ENCODE measurements at regions of chr1 and their contacts with region 1.

Region 1: GRCh38 chr1:150010393-150011115 is at the start of gene OTUD7B:
- DNase-seq: peak; percentile 88
- H3K4me3 ChIP-seq: peak within 1 kb of the TSS; percentile 96 to 98 (median 97)
- H3K27ac ChIP-seq: peak within 1 kb of the TSS; percentile 81
- H3K4me1 ChIP-seq: peaks cover 32% of the 10 kb centered on the region
- H3K27me3 ChIP-seq: no peaks in the 10 kb centered on the region
- CTCF ChIP-seq: no peak
- total RNA-seq, gene OTUD7B: 14.3 to 21.6 TPM

Region 2: GRCh38 chr1:149927503-149928387 is 82.8 kb before region 1 on chr1 and contains the start of gene SF3B4:
- CTCF ChIA-PET with region 1: no interaction called
- dilution Hi-C with region 1: no loop called
- in situ Hi-C with region 1: no loop called
- intact Hi-C with region 1: no loop called
- DNase-seq: peak; percentile 91
- H3K4me3 ChIP-seq: peak within 1 kb of the TSS; percentile 78 to 92 (median 92)
- H3K27ac ChIP-seq: peak within 1 kb of the TSS; percentile 88
- H3K4me1 ChIP-seq: peaks cover 32% of the 10 kb centered on the region
- H3K27me3 ChIP-seq: no peaks in the 10 kb centered on the region
- CTCF ChIP-seq: no peak
- total RNA-seq, gene SF3B4: 14.2 to 68.8 TPM

Region 3: DNA sequence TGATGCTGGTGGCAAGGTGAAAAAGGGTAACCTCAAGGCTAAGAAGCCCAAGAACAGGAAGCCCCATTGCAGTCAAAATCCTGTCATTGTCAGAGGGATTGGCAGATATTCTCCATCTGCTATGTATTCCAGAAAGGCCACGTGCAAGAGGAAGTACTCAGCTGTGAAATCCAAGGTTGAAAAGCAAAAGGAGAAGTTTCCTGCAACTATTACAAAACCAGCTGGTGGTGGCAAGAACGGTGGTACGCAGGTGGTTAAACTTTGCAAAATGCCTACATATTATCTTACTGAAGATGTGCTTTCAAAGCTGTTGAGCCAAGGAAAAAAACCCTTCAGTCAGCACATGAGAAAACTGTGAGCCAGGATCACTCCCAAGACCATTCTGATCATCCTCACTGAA is 43.4 kb after region 1 on chr1:
- CTCF ChIA-PET with region 1: no interaction called
- dilution Hi-C with region 1: no loop called
- in situ Hi-C with region 1: no loop called
- intact Hi-C with region 1: loop called (anchors 5 kb)
- DNase-seq: no peak
- H3K4me3 ChIP-seq: no peak overlapping the region
- H3K27ac ChIP-seq: no peak overlapping the region
- H3K4me1 ChIP-seq: no peaks in the 10 kb centered on the region
- H3K27me3 ChIP-seq: no peaks in the 10 kb centered on the region
- CTCF ChIP-seq: no peak

Region 4: GRCh38 chr1:150067184-150068036 is 56.9 kb after region 1 on chr1 and contains the start of gene VPS45:
- CTCF ChIA-PET with region 1: no interaction called
- dilution Hi-C with region 1: no loop called
- in situ Hi-C with region 1: no loop called
- intact Hi-C with region 1: loop called (anchors 1 kb)
- DNase-seq: peak; percentile 86
- H3K4me3 ChIP-seq: peak within 1 kb of the TSS; percentile 68 to 81 (median 73)
- H3K27ac ChIP-seq: peak within 1 kb of the TSS; percentile 83
- H3K4me1 ChIP-seq: peaks cover 15% of the 10 kb centered on the region
- H3K27me3 ChIP-seq: no peaks in the 10 kb centered on the region
- CTCF ChIP-seq: no peak
- total RNA-seq, gene VPS45: 30.0 to 42.2 TPM